Activated naive CD4-positive, alpha-beta T cell treated with anti-CD3 and anti-CD28 coated beads for 36 hours (primary cell): ENCODE measurements at regions of chr11 and their contacts with region 1.

Region 1: GRCh38 chr11:4060182-4060923 is 34.2 kb upstream of the RRM1 start:
- DNase-seq: no peak
- H3K4me3 Mint-ChIP-seq: no peak overlapping the region
- H3K27ac Mint-ChIP-seq: no peak overlapping the region
- H3K4me1 Mint-ChIP-seq: peaks cover 42% of the 10 kb centered on the region
- H3K27me3 Mint-ChIP-seq: no peaks in the 10 kb centered on the region

Region 2: DNA sequence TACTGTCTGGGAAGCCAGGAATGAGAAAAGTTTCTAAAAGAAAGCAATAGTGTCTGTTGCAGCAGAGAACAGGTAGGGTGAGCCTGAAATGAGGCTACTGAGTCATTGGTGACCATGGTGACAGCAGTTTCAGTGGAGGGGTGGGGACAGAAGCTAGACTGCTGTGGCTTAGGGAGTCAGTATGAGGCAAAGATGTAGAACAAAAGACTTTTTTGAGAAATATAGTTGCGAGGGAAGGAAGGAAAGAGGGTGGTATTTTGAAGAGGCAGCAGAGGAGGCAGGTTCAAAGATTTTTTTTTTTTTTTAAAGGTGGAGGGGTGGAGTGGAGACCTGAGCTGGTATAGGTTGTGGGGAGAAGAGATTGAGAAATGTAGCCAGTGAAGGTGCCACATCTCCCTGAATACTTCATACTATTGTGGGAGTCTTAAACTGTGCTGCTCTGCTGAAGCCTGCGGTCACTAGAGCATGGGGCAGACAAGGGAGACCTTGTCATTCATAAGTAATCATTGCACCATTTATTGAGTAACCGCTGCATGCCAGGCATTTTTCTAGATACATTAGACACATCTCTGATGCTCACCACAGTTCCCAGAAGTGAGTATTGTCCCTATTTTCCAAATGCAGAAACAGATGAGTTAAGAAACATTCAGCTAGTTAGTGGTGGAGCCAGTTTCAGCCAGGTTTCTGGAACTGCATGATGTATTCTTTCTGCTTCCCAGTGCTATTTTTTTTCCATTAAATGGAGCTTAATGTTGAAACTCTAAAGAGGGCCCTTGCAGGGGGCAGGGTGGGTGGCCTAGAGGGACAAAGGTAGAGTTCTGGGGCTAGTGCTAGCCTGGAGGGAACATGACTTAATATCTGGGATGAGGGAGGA is 155.0 kb before region 1 on chr11:
- CTCF ChIA-PET with region 1: no interaction called
- intact Hi-C with region 1: loop called (anchors 1 kb)
- DNase-seq: peak; percentile 89
- H3K4me3 Mint-ChIP-seq: peak overlapping the region; percentile 5
- H3K27ac Mint-ChIP-seq: peak overlapping the region; percentile 66
- H3K4me1 Mint-ChIP-seq: peaks cover 80% of the 10 kb centered on the region
- H3K27me3 Mint-ChIP-seq: no peaks in the 10 kb centered on the region

Region 3: GRCh38 chr11:3920148-3920852 is 140.1 kb before region 1 on chr11:
- CTCF ChIA-PET with region 1: no interaction called
- intact Hi-C with region 1: loop called (anchors 1 kb)
- DNase-seq: peak; percentile 93
- H3K4me3 Mint-ChIP-seq: no peak overlapping the region
- H3K27ac Mint-ChIP-seq: peak overlapping the region; percentile 74
- H3K4me1 Mint-ChIP-seq: peaks cover 61% of the 10 kb centered on the region
- H3K27me3 Mint-ChIP-seq: no peaks in the 10 kb centered on the region

Region 4: GRCh38 chr11:3947061-3947460 is 113.3 kb before region 1 on chr11:
- CTCF ChIA-PET with region 1: interaction called, 3 read pairs
- intact Hi-C with region 1: loop called (anchors 2 kb)
- DNase-seq: peak; percentile 75
- H3K4me3 Mint-ChIP-seq: no peak overlapping the region
- H3K27ac Mint-ChIP-seq: peak overlapping the region; percentile 89
- H3K4me1 Mint-ChIP-seq: peaks cover 92% of the 10 kb centered on the region
- H3K27me3 Mint-ChIP-seq: no peaks in the 10 kb centered on the region

Region 5: GRCh38 chr11:3959015-3959919 is 101.1 kb before region 1 on chr11:
- CTCF ChIA-PET with region 1: no interaction called
- intact Hi-C with region 1: loop called (anchors 1 kb)
- DNase-seq: no peak
- H3K4me3 Mint-ChIP-seq: no peak overlapping the region
- H3K27ac Mint-ChIP-seq: no peak overlapping the region
- H3K4me1 Mint-ChIP-seq: peaks cover 79% of the 10 kb centered on the region
- H3K27me3 Mint-ChIP-seq: no peaks in the 10 kb centered on the region

Region 6: GRCh38 chr11:3989921-3990290 is 70.4 kb before region 1 on chr11:
- CTCF ChIA-PET with region 1: interaction called, 8 read pairs
- intact Hi-C with region 1: loop called (anchors 1 kb)
- DNase-seq: peak; percentile 38
- H3K4me3 Mint-ChIP-seq: peak overlapping the region; percentile 49
- H3K27ac Mint-ChIP-seq: peak overlapping the region; percentile 63
- H3K4me1 Mint-ChIP-seq: peaks cover 64% of the 10 kb centered on the region
- H3K27me3 Mint-ChIP-seq: no peaks in the 10 kb centered on the region

Region 7: GRCh38 chr11:4017129-4017528 is 43.2 kb before region 1 on chr11:
- CTCF ChIA-PET with region 1: no interaction called
- intact Hi-C with region 1: no loop called
- DNase-seq: no peak
- H3K4me3 Mint-ChIP-seq: no peak overlapping the region
- H3K27ac Mint-ChIP-seq: no peak overlapping the region
- H3K4me1 Mint-ChIP-seq: peaks cover 50% of the 10 kb centered on the region
- H3K27me3 Mint-ChIP-seq: no peaks in the 10 kb centered on the region

Region 8: GRCh38 chr11:4094348-4095291 is 34.3 kb after region 1 on chr11 and contains the start of gene RRM1:
- CTCF ChIA-PET with region 1: no interaction called
- intact Hi-C with region 1: loop called (anchors 2 kb)
- DNase-seq: peak; percentile 96
- H3K4me3 Mint-ChIP-seq: peak within 1 kb of the TSS; percentile 98
- H3K27ac Mint-ChIP-seq: peak within 1 kb of the TSS; percentile 97
- H3K4me1 Mint-ChIP-seq: peaks cover 73% of the 10 kb centered on the region
- H3K27me3 Mint-ChIP-seq: no peaks in the 10 kb centered on the region
- total RNA-seq, gene RRM1: 296 to 311 TPM